Activated B cell treated with CpG ODN at 0.5 μM for 24 hours (primary cell): ENCODE measurements at regions of chr9 and their contacts with region 1.

Region 1: GRCh38 chr9:123997665-123998277 is 13.8 kb upstream of the LHX2 start:
- DNase-seq: peak; percentile 40
- ATAC-seq: peak; percentile 72
- H3K4me3 Mint-ChIP-seq: peak overlapping the region; percentile 89
- H3K27ac Mint-ChIP-seq: peak overlapping the region; percentile 72
- H3K4me1 Mint-ChIP-seq: peaks cover 40% of the 10 kb centered on the region
- H3K27me3 Mint-ChIP-seq: peaks cover 56% of the 10 kb centered on the region
- CTCF ChIP-seq: no peak

Region 2: DNA sequence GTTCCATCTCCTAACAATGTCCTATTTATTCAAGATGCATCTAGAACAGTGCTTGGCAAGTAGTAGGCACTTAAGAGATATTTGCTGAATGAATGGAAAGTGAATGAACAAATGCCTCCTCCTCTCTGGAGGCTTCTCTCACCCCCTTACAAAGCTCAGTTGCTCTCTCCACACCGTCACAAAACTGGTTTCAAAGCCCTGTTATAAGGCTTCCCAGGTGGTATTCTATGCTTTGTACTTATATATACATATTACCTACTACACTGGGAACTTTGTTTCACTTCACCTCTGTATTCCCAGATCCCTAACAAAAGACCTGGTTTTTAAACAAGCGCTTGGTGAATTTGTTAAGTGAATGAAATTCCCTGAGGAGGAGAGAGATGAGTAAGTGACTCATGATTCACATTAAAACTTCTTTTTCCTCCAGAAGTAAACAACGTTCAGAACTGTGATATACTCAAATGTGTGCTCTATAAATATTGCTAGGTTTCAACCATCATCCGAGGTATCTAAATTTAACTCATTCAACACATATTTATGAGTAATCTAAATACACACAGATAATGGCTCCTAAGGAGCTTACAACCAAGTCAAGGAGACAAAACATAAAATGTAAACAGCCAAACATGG is 103.8 kb before region 1 on chr9:
- CTCF ChIA-PET with region 1: no interaction called
- POLR2A ChIA-PET with region 1: no interaction called
- intact Hi-C with region 1: no loop called
- DNase-seq: no peak
- ATAC-seq: no peak
- H3K4me3 Mint-ChIP-seq: no peak overlapping the region
- H3K27ac Mint-ChIP-seq: no peak overlapping the region
- H3K4me1 Mint-ChIP-seq: peaks cover 6% of the 10 kb centered on the region
- H3K27me3 Mint-ChIP-seq: no peaks in the 10 kb centered on the region
- CTCF ChIP-seq: no peak

Region 3: DNA sequence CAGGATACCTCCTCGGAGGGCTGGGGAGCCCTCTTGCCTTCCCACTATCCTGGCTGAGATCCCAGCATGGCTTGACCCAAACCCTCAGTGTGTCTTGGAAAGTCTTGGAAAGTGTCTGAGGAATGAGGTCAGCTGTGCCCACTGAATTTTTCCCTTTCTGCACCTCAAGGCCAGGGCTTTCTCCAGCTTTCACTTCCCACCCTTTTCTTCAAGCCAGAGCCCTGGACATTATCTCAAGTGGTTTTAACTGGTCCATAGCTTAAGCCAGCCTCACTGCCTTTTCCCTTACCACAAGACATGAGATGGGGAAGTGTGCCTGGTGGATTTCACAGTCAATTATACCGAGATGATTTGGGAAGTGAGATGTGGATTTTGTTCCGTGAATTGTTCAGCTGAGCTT is 21.9 kb before region 1 on chr9:
- CTCF ChIA-PET with region 1: no interaction called
- POLR2A ChIA-PET with region 1: no interaction called
- intact Hi-C with region 1: loop called (anchors 2 kb)
- DNase-seq: no peak
- ATAC-seq: no peak
- H3K4me3 Mint-ChIP-seq: no peak overlapping the region
- H3K27ac Mint-ChIP-seq: no peak overlapping the region
- H3K4me1 Mint-ChIP-seq: no peaks in the 10 kb centered on the region
- H3K27me3 Mint-ChIP-seq: peaks cover 8% of the 10 kb centered on the region
- CTCF ChIP-seq: no peak

Region 4: GRCh38 chr9:124011420-124012301 is 13.9 kb after region 1 on chr9 and contains the start of gene LHX2:
- CTCF ChIA-PET with region 1: no interaction called
- POLR2A ChIA-PET with region 1: interaction called, 6 read pairs
- intact Hi-C with region 1: loop called (anchors 1 kb)
- DNase-seq: no peak
- ATAC-seq: peak; percentile 33
- H3K4me3 Mint-ChIP-seq: peak within 1 kb of the TSS; percentile 67
- H3K27ac Mint-ChIP-seq: peak within 1 kb of the TSS; percentile 62
- H3K4me1 Mint-ChIP-seq: peaks cover 52% of the 10 kb centered on the region
- H3K27me3 Mint-ChIP-seq: peaks cover 60% of the 10 kb centered on the region
- CTCF ChIP-seq: no peak
- total RNA-seq, gene LHX2: not detected in 2 replicates

Region 5: DNA sequence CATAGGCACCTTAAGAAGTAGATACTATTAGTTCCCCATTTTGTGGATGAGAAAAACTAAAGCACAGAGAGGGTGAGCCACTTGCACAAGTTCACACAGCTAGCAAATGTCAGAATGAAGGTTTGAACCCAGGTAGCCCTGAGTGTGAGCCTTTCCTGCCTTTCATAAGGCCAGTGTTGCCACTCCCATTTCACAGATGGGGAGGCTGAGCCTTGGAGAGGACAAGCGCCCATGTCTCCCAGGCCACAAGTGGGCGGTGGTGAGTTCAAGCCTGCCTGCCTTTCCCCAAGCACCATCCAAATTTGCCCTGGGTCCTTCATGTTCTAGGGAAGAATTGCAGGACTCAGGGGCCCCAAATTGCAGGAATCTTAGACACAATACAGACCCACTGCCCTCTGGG is 64.4 kb after region 1 on chr9:
- CTCF ChIA-PET with region 1: no interaction called
- POLR2A ChIA-PET with region 1: no interaction called
- intact Hi-C with region 1: no loop called
- DNase-seq: no peak
- ATAC-seq: no peak
- H3K4me3 Mint-ChIP-seq: no peak overlapping the region
- H3K27ac Mint-ChIP-seq: no peak overlapping the region
- H3K4me1 Mint-ChIP-seq: no peaks in the 10 kb centered on the region
- H3K27me3 Mint-ChIP-seq: peaks cover 17% of the 10 kb centered on the region
- CTCF ChIP-seq: no peak

Region 6: DNA sequence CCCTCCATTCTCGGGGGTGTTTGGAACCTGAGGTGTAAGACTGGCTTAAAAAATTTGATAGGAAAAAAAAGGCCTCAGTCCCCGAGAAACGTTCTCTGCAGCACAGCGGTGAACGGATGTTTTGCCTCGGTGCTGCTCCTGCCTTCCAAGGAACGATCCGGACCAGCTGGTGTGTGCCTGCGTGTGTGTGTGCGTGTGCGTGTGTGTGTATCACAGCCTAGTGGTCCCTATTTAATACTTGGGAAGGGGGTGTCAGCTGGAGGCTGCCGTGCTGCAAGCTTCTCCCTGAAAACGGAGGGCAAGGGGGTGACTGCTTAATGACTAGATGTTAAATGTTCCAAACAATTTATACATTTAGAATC is 90.7 kb after region 1 on chr9:
- CTCF ChIA-PET with region 1: no interaction called
- POLR2A ChIA-PET with region 1: interaction called, 11 read pairs
- intact Hi-C with region 1: no loop called
- DNase-seq: no peak
- ATAC-seq: no peak
- H3K4me3 Mint-ChIP-seq: no peak overlapping the region
- H3K27ac Mint-ChIP-seq: no peak overlapping the region
- H3K4me1 Mint-ChIP-seq: peaks cover 5% of the 10 kb centered on the region
- H3K27me3 Mint-ChIP-seq: peaks cover 12% of the 10 kb centered on the region
- CTCF ChIP-seq: no peak